Sciatic nerve (tissue), 2 donors: ENCODE measurements at regions of chr13 and their contacts with region 1.

Region 1: GRCh38 chr13:105758918-105759860 is 776.3 kb downstream of the EFNB2 start:
- DNase-seq: no peak
- ATAC-seq: no peak

Region 2: GRCh38 chr13:105442941-105443340 is 316.2 kb before region 1 on chr13:
- intact Hi-C with region 1: no loop called
- DNase-seq: no peak
- ATAC-seq: peak; percentile 89

Region 3: DNA sequence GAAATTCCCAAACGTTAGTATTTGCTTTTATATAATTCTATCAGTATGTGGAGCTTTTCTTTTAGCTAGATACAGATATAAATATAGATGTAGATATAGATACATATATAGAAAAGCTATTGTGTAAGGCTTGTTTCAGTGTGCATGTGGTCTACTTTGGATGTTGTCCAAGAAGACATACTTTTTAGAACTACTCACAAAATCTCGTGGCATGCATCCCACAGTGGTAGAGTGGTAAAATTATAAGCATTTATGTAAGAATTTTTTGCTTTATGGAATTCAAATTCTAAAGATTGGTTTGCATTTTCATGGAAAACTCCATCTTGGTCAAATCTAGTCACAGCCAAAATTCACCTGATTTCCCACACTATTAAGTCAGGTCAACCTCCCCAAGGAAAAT is 104.1 kb before region 1 on chr13:
- intact Hi-C with region 1: loop called (anchors 5 kb)
- DNase-seq: no peak
- ATAC-seq: no peak

Region 4: GRCh38 chr13:106393781-106394180 is 634.6 kb after region 1 on chr13:
- intact Hi-C with region 1: no loop called
- DNase-seq: no peak
- ATAC-seq: no peak